Natural killer cell (primary cell): ENCODE measurements at regions of chr19 and their contacts with region 1.

Region 1: GRCh38 chr19:30682999-30683536 is 310.9 kb downstream of the ZNF536 start:
- DNase-seq: peak; percentile 25 to 63
- ATAC-seq: peak in 2 of 3 donors; percentile 38 to 67
- H3K4me3 ChIP-seq: no peak overlapping the region
- H3K4me3 Mint-ChIP-seq: no peak overlapping the region
- H3K27ac ChIP-seq: no peak overlapping the region
- H3K27ac Mint-ChIP-seq: no peak overlapping the region
- H3K4me1 ChIP-seq: no peaks in the 10 kb centered on the region
- H3K4me1 Mint-ChIP-seq: no peaks in the 10 kb centered on the region
- H3K27me3 ChIP-seq: no peaks in the 10 kb centered on the region
- H3K27me3 Mint-ChIP-seq: peaks cover 32 to 50% of the 10 kb centered on the region in 2 donors
- CTCF ChIP-seq: peak; percentile 81

Region 2: GRCh38 chr19:30959011-30959410 is 275.9 kb after region 1 on chr19:
- intact Hi-C with region 1: no loop called
- DNase-seq: no peak
- ATAC-seq: no peak
- H3K4me3 ChIP-seq: no peak overlapping the region
- H3K4me3 Mint-ChIP-seq: no peak overlapping the region
- H3K27ac ChIP-seq: no peak overlapping the region
- H3K27ac Mint-ChIP-seq: no peak overlapping the region
- H3K4me1 ChIP-seq: no peaks in the 10 kb centered on the region
- H3K4me1 Mint-ChIP-seq: no peaks in the 10 kb centered on the region
- H3K27me3 ChIP-seq: no peaks in the 10 kb centered on the region
- H3K27me3 Mint-ChIP-seq: peaks cover 6 to 11% of the 10 kb centered on the region in 2 donors
- CTCF ChIP-seq: no peak

Region 3: DNA sequence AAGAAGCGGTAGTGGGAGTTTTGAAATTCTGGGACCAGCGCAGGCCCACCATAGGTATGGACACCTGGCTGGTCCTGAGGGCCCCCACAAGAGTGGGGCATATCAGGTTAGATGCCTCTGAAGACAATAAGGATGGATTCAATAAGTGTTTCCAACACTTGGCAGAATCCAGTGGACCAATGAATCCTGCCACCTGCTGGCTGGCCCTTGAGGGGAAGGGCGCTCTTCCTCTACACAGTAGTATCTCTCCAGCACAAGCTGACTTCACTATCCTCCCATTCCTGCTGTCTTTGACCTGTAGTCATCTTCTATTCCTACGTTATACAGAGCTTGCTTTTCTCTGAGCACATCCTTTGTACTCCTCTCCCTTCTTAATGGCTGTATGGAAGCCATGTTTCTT is 865.9 kb after region 1 on chr19:
- intact Hi-C with region 1: loop called (anchors 10 kb)
- DNase-seq: peak in 1 of 2 donors; percentile 8
- ATAC-seq: no peak
- H3K4me3 ChIP-seq: no peak overlapping the region
- H3K4me3 Mint-ChIP-seq: no peak overlapping the region
- H3K27ac ChIP-seq: no peak overlapping the region
- H3K27ac Mint-ChIP-seq: no peak overlapping the region
- H3K4me1 ChIP-seq: no peaks in the 10 kb centered on the region
- H3K4me1 Mint-ChIP-seq: no peaks in the 10 kb centered on the region
- H3K27me3 ChIP-seq: no peaks in the 10 kb centered on the region
- H3K27me3 Mint-ChIP-seq: peaks cover 0 to 18% of the 10 kb centered on the region in 2 donors
- CTCF ChIP-seq: peak; percentile 22